ENCODE measurements at regions of chr7 and their contacts with region 1.

Region 1: GRCh38 chr7:56074371-56074791 is 10.3 kb downstream of the SUMF2 start:
- H3K4me3 Mint-ChIP-seq: no peak overlapping the region
- H3K27ac Mint-ChIP-seq: no peak overlapping the region
- H3K4me1 Mint-ChIP-seq: peaks cover 6% of the 10 kb centered on the region
- H3K27me3 Mint-ChIP-seq: no peaks in the 10 kb centered on the region

Region 2: DNA sequence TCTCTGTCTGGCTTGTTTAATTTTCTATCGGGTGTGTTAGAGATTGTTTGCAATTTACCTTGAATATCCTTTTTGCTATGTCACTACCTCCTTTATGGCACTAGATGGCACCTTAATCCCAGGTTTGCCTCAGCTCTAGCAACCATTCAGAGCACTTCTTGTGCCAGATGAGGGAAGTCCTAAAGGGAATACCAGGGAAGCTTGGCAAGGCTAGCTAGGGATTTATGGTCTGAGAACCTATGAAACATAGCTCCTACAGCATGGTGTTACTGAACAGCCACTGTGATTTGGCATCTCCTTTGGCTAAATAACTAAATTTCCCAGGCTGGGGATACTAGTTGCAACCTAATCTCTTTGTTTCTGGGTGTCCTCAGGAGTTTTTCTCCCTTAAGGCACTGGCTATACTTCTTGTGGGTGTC is 433.1 kb before region 1 on chr7:
- intact Hi-C with region 1: loop called (anchors 2 kb)
- H3K4me3 Mint-ChIP-seq: no peak overlapping the region
- H3K27ac Mint-ChIP-seq: no peak overlapping the region
- H3K4me1 Mint-ChIP-seq: no peaks in the 10 kb centered on the region
- H3K27me3 Mint-ChIP-seq: peaks cover 2% of the 10 kb centered on the region

Region 3: DNA sequence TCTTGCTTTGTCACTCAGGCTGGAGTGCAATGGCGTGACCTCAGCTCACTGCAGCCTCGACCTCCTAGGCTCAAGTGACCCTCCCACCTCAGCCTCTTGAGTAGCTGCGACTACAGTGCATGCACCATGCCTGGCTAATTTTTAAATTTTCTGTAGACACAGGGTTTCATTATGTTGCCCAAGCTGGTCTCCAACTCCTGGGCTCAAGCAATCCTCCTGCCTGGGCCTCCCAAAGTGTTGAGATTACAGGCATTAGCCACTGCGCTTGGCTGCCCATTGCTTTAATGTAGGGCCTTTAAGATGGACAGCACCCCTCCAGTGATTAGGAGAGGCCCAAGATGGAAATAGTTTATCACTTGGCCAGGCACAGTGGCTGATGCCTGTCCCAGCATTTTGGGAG is 70.6 kb before region 1 on chr7:
- intact Hi-C with region 1: loop called (anchors 1 kb)
- H3K4me3 Mint-ChIP-seq: no peak overlapping the region
- H3K27ac Mint-ChIP-seq: peak overlapping the region; percentile 35
- H3K4me1 Mint-ChIP-seq: peaks cover 27% of the 10 kb centered on the region
- H3K27me3 Mint-ChIP-seq: no peaks in the 10 kb centered on the region

Region 4: GRCh38 chr7:56033671-56034432 is 40.5 kb before region 1 on chr7:
- intact Hi-C with region 1: no loop called
- H3K4me3 Mint-ChIP-seq: peak overlapping the region; percentile 90
- H3K27ac Mint-ChIP-seq: peak overlapping the region; percentile 78
- H3K4me1 Mint-ChIP-seq: peaks cover 12% of the 10 kb centered on the region
- H3K27me3 Mint-ChIP-seq: no peaks in the 10 kb centered on the region

Region 5: GRCh38 chr7:56115852-56116538 is 41.6 kb after region 1 on chr7 and contains the start of gene NUPR2:
- intact Hi-C with region 1: no loop called
- H3K4me3 Mint-ChIP-seq: no peak within 1 kb of the TSS
- H3K27ac Mint-ChIP-seq: no peak within 1 kb of the TSS
- H3K4me1 Mint-ChIP-seq: no peaks in the 10 kb centered on the region
- H3K27me3 Mint-ChIP-seq: peaks cover 31% of the 10 kb centered on the region

Measured in dendritic cell treated with granulocyte-macrophage colony-stimulating factor and Interleukin-4, amounts not matched to agents 40 ng/mL and 50 ng/mL, for 4 days (primary cell).